AG04450 (cell line): ENCODE measurements at regions of chr1 and their contacts with region 1.

Region 1: GRCh38 chr1:153990468-153991150 is at the start of gene RPS27:
- DNase-seq: peak; percentile 96
- H3K4me3 ChIP-seq: peak within 1 kb of the TSS; percentile 88
- H3K27ac ChIP-seq: peak within 1 kb of the TSS; percentile 83
- H3K27me3 ChIP-seq: no peaks in the 10 kb centered on the region
- CTCF ChIP-seq: no peak
- polyA plus RNA-seq, gene RPS27: 6,731 and 8,507 TPM in 2 replicates

Region 2: DNA sequence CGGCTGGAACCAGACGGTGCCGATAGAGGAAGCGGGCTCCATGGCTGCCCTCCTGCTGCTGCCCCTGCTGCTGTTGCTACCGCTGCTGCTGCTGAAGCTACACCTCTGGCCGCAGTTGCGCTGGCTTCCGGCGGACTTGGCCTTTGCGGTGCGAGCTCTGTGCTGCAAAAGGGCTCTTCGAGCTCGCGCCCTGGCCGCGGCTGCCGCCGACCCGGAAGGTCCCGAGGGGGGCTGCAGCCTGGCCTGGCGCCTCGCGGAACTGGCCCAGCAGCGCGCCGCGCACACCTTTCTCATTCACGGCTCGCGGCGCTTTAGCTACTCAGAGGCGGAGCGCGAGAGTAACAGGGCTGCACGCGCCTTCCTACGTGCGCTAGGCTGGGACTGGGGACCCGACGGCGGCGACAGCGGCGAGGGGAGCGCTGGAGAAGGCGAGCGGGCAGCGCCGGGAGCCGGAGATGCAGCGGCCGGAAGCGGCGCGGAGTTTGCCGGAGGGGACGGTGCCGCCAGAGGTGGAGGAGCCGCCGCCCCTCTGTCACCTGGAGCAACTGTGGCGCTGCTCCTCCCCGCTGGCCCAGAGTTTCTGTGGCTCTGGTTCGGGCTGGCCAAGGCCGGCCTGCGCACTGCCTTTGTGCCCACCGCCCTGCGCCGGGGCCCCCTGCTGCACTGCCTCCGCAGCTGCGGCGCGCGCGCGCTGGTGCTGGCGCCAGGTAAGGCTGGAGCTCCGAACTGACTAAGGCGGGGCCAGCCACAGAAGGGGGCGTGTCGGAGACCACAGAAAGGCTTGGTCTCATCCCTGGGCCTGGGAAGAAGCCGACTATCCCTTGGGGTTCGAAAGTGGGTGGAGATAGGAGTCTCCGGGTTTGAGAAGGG is 214.9 kb before region 1 on chr1:
- CTCF ChIA-PET with region 1: interaction called, 16 read pairs
- POLR2A ChIA-PET with region 1: interaction called, 7 read pairs
- DNase-seq: no peak
- H3K4me3 ChIP-seq: peak overlapping the region; percentile 73
- H3K27ac ChIP-seq: no peak overlapping the region
- H3K27me3 ChIP-seq: no peaks in the 10 kb centered on the region
- CTCF ChIP-seq: no peak

Region 3: GRCh38 chr1:153818876-153819275 is 171.7 kb before region 1 on chr1:
- CTCF ChIA-PET with region 1: interaction called, 46 read pairs
- POLR2A ChIA-PET with region 1: interaction called, 4 read pairs
- DNase-seq: no peak
- H3K4me3 ChIP-seq: no peak overlapping the region
- H3K27ac ChIP-seq: no peak overlapping the region
- H3K27me3 ChIP-seq: no peaks in the 10 kb centered on the region
- CTCF ChIP-seq: no peak

Region 4: DNA sequence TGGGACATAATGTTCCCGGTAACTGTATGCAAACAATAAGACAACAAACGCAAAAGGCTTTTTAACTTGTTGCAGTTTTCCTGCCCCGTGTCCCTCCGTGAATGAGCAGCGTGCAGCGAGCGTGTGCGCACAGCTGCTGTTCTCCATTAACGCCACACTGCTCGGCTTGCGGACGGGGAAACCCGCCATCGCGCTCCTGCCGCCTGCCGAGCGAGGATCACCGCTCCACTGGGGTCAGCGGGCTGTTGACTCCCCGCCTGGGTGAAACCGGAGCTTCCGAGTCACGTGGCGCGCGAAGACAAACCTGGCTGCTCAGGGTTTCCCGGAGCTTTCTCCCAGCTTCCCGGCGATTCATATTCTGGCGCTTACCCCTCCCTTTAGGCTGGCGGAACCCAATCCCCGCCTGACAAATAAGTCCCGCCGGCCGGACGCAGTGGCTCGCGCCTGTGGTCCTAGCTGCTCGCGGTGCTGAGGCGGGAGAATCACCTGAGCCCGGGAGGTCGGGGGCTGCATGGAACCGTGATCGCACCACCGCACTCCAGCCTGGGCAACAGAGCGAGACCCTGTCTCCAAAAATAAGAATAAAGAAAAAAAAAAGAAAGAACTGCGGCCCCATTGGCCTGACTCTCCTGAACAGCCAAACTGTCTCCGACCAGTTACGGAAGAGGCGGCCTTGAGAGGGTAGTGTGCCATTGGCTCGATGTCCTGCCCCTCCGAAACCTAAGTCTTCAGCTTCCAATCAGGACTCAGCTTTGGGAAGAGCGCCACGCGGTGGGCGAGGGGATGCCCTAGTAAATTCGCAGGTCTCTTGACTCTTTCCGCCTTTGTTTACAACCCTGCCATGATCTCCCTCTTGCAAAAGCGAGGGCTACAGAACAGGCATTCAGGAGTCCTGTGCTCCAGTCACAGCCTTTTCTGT is 23.3 kb before region 1 on chr1 and contains the start of gene CREB3L4:
- CTCF ChIA-PET with region 1: interaction called, 31 read pairs
- POLR2A ChIA-PET with region 1: interaction called, 22 read pairs
- DNase-seq: peak; percentile 93
- H3K4me3 ChIP-seq: peak within 1 kb of the TSS; percentile 75
- H3K27ac ChIP-seq: peak within 1 kb of the TSS; percentile 86
- H3K27me3 ChIP-seq: no peaks in the 10 kb centered on the region
- CTCF ChIP-seq: peak; percentile 49
- polyA plus RNA-seq, gene CREB3L4: 7.7 and 10.0 TPM in 2 replicates

Region 5: GRCh38 chr1:154019269-154019668 is 28.7 kb after region 1 on chr1:
- CTCF ChIA-PET with region 1: interaction called, 3 read pairs
- POLR2A ChIA-PET with region 1: interaction called, 10 read pairs
- DNase-seq: no peak
- H3K4me3 ChIP-seq: no peak overlapping the region
- H3K27ac ChIP-seq: no peak overlapping the region
- H3K27me3 ChIP-seq: no peaks in the 10 kb centered on the region
- CTCF ChIP-seq: no peak

Region 6: DNA sequence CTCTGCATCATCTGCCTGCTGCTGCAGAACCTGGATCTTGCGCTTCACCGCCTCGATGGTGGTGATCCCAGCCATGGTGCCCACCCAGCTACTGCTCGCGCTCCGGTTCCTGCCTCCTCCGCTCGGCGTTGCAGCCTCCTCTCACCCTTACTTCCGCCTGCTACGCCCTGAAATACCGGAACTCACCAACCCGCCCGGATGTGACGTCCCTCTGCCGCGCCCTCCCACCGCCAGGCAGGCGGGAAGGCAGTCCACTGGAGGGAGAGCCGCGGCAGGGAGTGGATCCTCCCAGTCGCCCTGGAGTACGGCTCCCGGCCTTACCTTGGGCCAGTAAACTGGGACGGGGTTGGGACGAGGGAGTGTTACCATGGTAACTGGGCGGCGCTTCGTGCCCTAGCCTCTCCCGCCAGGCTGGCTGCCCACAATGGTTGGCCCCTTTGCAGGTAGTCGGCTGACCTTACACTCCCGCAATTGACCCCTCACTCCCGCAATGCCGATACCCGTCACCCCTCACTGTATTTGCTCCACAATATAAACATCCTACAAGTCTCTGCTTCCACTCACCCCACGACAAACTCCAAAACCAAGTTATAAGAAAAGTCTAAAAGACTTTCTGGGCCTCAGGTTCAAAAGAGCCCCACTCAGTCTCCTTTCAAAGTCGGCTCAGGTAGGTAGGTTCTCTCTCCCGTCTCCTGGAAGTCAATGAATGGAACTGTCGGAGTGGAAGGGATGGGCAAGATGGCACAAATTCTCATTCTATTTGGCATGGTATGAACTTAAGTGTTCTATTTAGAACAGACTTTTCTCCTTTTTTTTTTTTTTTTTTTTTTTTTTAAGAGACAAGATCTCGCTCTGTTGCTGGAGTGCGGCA is 192.7 kb after region 1 on chr1:
- CTCF ChIA-PET with region 1: no interaction called
- POLR2A ChIA-PET with region 1: interaction called, 11 read pairs
- DNase-seq: peak; percentile 79
- H3K4me3 ChIP-seq: peak overlapping the region; percentile 99
- H3K27ac ChIP-seq: peak overlapping the region; percentile 84
- H3K27me3 ChIP-seq: no peaks in the 10 kb centered on the region
- CTCF ChIP-seq: no peak

Region 7: DNA sequence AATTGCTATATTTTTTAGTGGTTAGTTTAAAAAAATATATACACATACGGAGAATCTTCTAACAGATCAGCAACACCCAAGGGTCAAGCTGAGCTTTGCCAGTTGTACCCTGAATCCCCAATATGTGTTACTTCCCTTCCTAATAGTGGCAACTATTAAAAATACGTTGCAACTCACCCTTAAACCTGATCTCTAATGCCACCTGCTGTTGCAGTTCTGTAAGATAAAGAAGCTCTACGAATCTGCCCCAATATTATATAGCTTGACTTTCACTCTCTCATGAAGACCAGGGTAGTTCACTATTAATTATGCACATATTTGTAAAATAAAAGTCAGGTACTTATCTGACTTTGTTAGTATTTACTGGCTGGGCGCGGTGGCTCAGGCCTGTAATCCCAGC is 1513.6 kb after region 1 on chr1:
- CTCF ChIA-PET with region 1: no interaction called
- POLR2A ChIA-PET with region 1: no interaction called
- DNase-seq: no peak
- H3K4me3 ChIP-seq: no peak overlapping the region
- H3K27ac ChIP-seq: no peak overlapping the region
- H3K27me3 ChIP-seq: no peaks in the 10 kb centered on the region
- CTCF ChIP-seq: peak; percentile 46